ENCODE measurements at regions of chr16 and their contacts with region 1.

Region 1: DNA sequence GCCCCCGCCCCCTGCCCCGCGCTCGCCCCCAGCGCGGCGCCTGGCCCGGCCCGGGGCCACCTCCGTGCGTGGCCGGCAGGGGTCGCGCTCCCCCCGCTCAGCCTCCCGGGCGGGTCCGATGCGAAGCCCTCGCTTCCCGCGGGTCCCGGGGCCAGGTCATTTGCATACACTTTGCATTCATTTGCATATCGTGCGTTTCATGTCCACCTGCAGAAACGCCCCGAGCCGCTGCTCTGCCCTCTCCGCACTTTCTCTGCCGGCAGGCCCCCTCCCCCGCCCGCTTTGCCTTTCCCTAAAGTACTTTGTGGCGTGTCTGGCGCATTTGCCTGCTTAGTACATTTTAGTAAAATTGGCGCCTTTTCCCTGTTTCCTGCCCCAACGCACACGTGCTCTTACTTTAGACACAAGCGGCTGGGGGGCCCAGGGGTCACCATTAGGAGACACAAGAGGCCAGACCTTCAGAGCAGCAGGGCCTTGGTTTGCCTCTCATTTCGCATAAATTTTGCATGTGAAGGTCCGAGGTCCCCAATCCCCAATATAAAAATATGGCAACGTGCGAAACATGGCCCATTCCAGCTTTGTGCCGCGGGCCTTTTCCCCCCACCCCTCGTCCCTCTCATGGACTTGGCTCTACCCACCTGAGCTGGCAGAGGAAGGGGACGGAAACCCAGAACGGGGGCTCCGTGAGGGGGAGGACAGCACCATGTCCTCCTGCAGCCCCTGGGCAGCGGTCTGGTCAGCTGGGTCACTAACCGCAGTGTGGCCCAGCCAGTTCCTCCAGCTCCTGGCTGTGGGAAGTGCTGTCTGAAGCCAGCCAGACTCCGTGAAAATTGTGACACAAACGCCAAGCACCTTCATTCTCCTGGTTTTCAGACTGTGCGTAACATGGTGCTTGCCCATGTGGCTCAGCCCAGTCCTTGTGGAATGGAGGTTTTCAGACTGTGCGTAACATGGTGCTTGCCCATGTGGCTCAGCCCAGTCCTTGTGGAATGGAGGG is 34.8 kb downstream of the CBFA2T3 start:
- DNase-seq: peak; percentile 79
- ATAC-seq: peak; percentile 86
- H3K4me3 Mint-ChIP-seq: no peak overlapping the region
- H3K27ac Mint-ChIP-seq: no peak overlapping the region
- H3K4me1 Mint-ChIP-seq: no peaks in the 10 kb centered on the region
- H3K27me3 Mint-ChIP-seq: peaks cover 18% of the 10 kb centered on the region

Region 2: GRCh38 chr16:88393034-88393433 is 549.2 kb before region 1 on chr16:
- CTCF ChIA-PET with region 1: no interaction called
- POLR2A ChIA-PET with region 1: no interaction called
- intact Hi-C with region 1: no loop called
- DNase-seq: no peak
- ATAC-seq: no peak
- H3K4me3 Mint-ChIP-seq: no peak overlapping the region
- H3K27ac Mint-ChIP-seq: no peak overlapping the region
- H3K4me1 Mint-ChIP-seq: no peaks in the 10 kb centered on the region
- H3K27me3 Mint-ChIP-seq: peaks cover 7% of the 10 kb centered on the region

Region 3: GRCh38 chr16:88803264-88803987 is 138.8 kb before region 1 on chr16 and contains the start of gene CDT1:
- CTCF ChIA-PET with region 1: no interaction called
- POLR2A ChIA-PET with region 1: no interaction called
- intact Hi-C with region 1: no loop called
- DNase-seq: peak; percentile 90
- ATAC-seq: peak; percentile 32
- H3K4me3 Mint-ChIP-seq: peak within 1 kb of the TSS; percentile 83
- H3K27ac Mint-ChIP-seq: peak within 1 kb of the TSS; percentile 94
- H3K4me1 Mint-ChIP-seq: peaks cover 24% of the 10 kb centered on the region
- H3K27me3 Mint-ChIP-seq: no peaks in the 10 kb centered on the region
- total RNA-seq, gene CDT1: 136 to 182 TPM

Region 4: GRCh38 chr16:89115216-89115861 is 173.1 kb after region 1 on chr16:
- CTCF ChIA-PET with region 1: interaction called, 4 read pairs
- POLR2A ChIA-PET with region 1: no interaction called
- intact Hi-C with region 1: loop called in 1 of 2 experiments (anchors 2 kb)
- DNase-seq: peak; percentile 90
- ATAC-seq: peak; percentile 86
- H3K4me3 Mint-ChIP-seq: peak overlapping the region; percentile 74
- H3K27ac Mint-ChIP-seq: peak overlapping the region; percentile 89
- H3K4me1 Mint-ChIP-seq: peaks cover 58% of the 10 kb centered on the region
- H3K27me3 Mint-ChIP-seq: no peaks in the 10 kb centered on the region